Left ventricle myocardium inferior (tissue), 1 donor: ENCODE measurements at regions of chr4 and their contacts with region 1.

Region 1: DNA sequence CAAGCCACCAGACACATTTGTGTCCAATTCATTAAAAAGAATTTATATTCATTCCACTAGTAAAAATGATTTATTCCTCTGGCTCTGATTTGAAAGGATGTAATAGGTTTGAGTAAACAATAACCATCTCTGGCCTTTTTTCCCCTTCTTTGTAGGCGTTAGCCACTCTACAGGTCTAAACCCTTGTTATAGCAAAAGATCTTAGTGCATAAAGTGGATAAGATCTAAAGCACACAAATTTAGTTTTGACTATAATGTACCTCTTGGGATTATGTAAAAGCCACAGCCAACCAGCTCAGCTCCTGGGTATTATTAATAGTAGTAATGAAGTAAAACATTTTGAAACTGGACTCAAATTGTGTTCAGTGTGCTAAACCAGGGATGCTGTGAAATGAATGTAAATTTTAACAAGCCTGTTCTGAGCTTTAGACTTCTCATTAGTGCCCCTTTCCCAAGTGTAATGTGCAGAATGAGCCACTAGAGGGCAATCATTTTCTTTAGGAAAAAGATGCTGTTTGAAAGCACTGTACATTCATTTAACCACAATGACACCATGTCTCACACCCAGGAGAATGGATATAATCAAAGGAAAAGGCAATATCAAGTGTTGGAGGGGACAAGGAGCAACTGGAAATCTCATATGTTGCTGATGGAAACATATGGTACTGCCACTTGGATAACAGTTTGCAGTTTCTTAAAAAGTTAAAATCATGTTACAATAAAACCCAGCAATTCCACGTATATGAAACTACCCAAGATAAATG is 69.7 kb downstream of the KLHL8 start:
- DNase-seq: no peak
- H3K4me3 ChIP-seq: no peak overlapping the region
- H3K27ac ChIP-seq: no peak overlapping the region
- H3K4me1 ChIP-seq: no peaks in the 10 kb centered on the region
- H3K27me3 ChIP-seq: no peaks in the 10 kb centered on the region
- CTCF ChIP-seq: peak; percentile 92

Region 2: GRCh38 chr4:86759298-86759697 is 391.4 kb before region 1 on chr4:
- intact Hi-C with region 1: no loop called
- DNase-seq: no peak
- H3K4me3 ChIP-seq: no peak overlapping the region
- H3K27ac ChIP-seq: no peak overlapping the region
- H3K4me1 ChIP-seq: no peaks in the 10 kb centered on the region
- H3K27me3 ChIP-seq: no peaks in the 10 kb centered on the region
- CTCF ChIP-seq: no peak

Region 3: DNA sequence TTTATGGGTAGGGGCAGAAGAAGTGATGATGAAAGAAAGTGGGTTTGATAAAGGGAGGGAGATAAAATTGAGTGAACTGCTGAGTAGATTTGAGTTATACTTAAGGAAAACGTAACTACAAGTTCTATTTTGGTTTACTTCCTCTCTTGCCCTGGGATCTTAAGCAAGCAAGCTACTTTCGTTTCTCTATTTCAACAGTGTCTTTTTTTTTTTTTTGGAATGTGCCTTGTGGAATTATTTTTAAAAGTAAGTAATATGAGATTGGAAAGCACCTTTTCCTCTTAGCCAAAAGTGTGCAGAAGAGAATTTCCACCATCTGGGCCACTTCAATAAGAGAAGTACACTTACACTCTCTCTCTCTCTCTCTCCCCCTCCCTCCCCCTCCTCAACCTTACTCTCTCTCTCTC is 242.4 kb before region 1 on chr4:
- intact Hi-C with region 1: no loop called
- DNase-seq: no peak
- H3K4me3 ChIP-seq: peak overlapping the region; percentile 15
- H3K27ac ChIP-seq: peak overlapping the region; percentile 47
- H3K4me1 ChIP-seq: peaks cover 27% of the 10 kb centered on the region
- H3K27me3 ChIP-seq: no peaks in the 10 kb centered on the region
- CTCF ChIP-seq: no peak

Region 4: GRCh38 chr4:87235020-87235671 is 84.5 kb after region 1 on chr4:
- intact Hi-C with region 1: loop called (anchors 5 kb)
- DNase-seq: no peak
- H3K4me3 ChIP-seq: peak overlapping the region; percentile 60
- H3K27ac ChIP-seq: no peak overlapping the region
- H3K4me1 ChIP-seq: peaks cover 12% of the 10 kb centered on the region
- H3K27me3 ChIP-seq: no peaks in the 10 kb centered on the region
- CTCF ChIP-seq: no peak